ENCODE measurements at regions of chr11 and their contacts with region 1.

Region 1: DNA sequence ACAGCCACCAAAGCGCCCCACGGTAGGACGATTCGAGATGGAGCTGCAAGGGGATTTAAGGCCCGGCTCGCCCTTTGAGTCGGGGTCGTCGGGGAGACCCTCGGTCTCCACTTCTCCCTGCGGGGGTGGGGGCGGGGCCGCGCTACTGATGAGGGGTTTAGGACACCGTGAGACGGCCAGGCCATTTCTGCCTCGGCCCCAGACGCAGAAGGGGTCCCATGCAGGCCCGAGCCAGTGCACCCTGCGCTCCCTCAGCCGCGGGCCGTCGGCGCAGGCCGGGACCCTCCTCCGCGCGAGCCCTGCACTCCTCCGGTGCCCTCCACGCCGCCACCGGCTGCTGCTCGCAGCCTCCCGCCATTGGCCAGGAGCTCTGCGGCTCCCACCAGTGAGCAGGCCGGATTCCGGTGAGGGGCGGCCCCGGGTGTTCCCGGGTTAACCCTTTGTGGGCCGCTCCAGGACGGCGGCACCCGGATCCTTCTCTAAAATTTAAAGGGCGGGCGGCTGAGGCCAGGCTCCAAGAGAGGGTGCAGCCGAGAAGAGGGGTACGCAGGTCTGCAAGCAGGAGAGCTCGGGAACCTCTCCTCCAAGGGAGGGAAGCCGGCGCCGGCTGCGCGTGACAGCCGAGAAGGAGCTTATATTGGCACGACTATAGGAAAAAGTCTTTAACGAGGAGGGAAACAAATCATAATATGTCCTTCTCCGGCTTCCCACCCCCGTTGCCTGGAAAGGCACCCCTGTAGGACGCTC is 18.0 kb downstream of the CREB3L1 start:
- DNase-seq: no peak
- H3K4me3 ChIP-seq: peak overlapping the region; percentile 61
- H3K27ac ChIP-seq: peak overlapping the region; percentile 88
- H3K27me3 ChIP-seq: no peaks in the 10 kb centered on the region
- CTCF ChIP-seq: no peak

Region 2: GRCh38 chr11:46247664-46248063 is 47.8 kb before region 1 on chr11:
- CTCF ChIA-PET with region 1: interaction called, 4 read pairs
- POLR2A ChIA-PET with region 1: interaction called, 35 read pairs
- DNase-seq: no peak
- H3K4me3 ChIP-seq: no peak overlapping the region
- H3K27ac ChIP-seq: peak overlapping the region; percentile 99
- H3K27me3 ChIP-seq: no peaks in the 10 kb centered on the region
- CTCF ChIP-seq: peak; percentile 10; the same call in 1 of the 2 replicates

Region 3: DNA sequence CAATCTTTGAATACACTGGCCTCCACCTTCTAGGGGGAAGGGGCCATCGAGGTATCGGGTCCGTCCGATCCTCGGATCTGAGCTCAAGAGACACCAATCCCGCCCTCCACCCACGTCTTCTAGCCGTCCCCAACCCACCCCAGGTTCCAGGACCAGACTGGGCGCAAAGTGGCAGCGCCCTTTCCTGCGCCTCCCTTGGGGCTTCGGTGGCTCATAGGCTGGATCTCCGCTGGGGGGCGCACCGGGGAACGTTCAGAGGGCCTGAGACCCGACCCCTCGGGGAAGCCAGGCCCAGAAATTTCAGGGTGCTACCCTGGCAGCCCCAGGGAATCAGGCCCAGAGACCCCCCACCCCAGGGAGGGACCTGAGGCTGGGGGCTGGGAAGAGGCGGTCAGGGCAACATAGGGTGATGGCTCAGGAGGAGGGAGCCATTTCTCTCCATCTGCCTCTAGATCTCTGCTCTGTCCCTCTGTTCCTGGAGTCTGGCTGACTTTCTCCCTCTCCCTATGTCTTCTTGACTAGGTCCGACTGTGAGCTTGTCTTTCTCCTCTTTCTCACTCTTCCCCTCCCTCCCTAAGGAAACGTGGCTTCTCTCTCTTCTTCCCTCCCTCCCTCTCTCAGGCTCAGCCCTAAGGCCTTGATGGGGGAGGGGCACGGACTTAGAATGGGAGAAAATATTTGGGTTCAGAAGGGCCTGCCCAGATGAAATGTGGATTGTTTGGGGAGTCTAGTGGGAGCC is 16.9 kb before region 1 on chr11:
- CTCF ChIA-PET with region 1: interaction called, 38 read pairs
- POLR2A ChIA-PET with region 1: interaction called, 27 read pairs
- DNase-seq: no peak
- H3K4me3 ChIP-seq: peak overlapping the region; percentile 95
- H3K27ac ChIP-seq: peak overlapping the region; percentile 91
- H3K27me3 ChIP-seq: no peaks in the 10 kb centered on the region
- CTCF ChIP-seq: peak; percentile 83

Region 4: DNA sequence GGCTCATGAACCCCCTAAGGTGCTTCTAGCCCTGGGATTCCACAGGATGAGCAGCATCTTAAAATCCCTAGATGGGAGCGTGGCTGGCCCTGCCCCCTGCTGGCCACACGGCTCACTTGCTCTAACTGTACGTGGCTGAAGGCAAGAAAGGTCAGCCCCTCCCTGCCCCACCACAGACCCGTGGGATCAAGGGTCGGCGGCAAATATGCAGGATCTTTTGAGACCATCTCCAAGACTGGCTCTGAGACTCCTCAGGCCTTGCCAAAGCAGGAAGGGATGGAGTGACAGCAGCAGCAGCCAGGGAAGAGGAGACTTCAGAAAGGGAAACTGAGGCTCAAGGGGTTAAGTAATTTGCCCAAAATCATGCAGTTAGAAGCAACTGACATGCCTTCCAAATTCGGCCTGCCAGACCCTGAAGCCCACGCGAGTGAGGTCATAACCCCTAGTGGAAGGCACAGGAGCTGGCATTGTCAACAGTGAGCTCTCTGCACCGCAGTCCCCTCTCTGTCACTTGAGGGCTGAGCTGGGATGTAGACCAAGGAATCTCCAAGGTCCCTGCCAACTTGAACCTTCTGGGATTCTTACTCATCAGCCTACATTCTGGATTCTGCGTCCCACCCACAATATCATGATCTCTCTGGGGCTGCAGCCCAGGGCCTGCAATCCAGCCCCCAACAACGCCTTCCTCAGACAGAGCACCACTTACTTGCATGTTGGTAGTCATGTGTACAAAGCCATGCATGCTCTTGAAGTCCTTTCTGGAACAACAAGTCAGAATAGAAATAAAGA is 13.3 kb after region 1 on chr11:
- CTCF ChIA-PET with region 1: interaction called, 14 read pairs
- POLR2A ChIA-PET with region 1: interaction called, 4 read pairs
- DNase-seq: no peak
- H3K4me3 ChIP-seq: no peak overlapping the region
- H3K27ac ChIP-seq: peak overlapping the region; percentile 47
- H3K27me3 ChIP-seq: no peaks in the 10 kb centered on the region
- CTCF ChIP-seq: peak; percentile 87

Region 5: DNA sequence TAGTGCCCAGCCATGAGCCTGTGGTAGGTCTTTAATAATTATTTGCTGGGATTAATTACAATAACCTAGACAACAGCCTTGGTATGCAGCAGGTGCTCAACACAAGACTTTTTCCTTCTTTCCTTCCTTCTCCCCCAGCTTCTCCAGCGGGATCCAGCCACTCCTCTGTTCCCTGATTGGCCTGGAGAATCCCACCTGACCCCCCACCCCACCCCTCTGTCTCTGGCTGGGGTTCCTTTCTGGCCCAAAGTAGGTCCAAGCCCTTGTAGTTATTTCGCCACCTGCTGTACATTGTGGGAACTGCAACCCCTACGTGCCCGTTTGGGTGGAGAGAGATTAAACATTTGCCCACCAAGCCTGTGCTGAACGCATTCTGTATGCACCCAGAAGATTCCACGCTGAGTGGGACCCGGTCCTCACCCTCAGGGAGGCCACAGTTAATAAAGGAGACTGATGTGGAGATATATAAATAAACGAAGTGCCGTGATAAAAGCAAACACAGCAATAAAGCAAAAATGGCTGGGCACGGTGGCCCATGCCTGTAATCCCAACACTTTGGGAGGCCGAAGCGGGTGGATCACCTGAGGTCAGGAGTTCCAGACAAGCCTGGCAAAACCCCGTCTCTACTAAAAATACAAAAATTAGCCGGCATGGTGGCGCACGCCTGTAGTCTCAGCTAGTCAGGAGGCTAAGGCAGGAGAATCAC is 19.7 kb after region 1 on chr11:
- CTCF ChIA-PET with region 1: interaction called, 14 read pairs
- POLR2A ChIA-PET with region 1: interaction called, 7 read pairs
- DNase-seq: no peak
- H3K4me3 ChIP-seq: no peak overlapping the region
- H3K27ac ChIP-seq: peak overlapping the region; percentile 21
- H3K27me3 ChIP-seq: no peaks in the 10 kb centered on the region
- CTCF ChIP-seq: peak; percentile 92

Region 6: GRCh38 chr11:46346886-46347636 is 51.6 kb after region 1 on chr11 and contains the start of gene DGKZ:
- CTCF ChIA-PET with region 1: no interaction called
- POLR2A ChIA-PET with region 1: no interaction called
- DNase-seq: no peak
- H3K4me3 ChIP-seq: peak within 1 kb of the TSS; percentile 90
- H3K27ac ChIP-seq: no peak within 1 kb of the TSS
- H3K27me3 ChIP-seq: no peaks in the 10 kb centered on the region
- CTCF ChIP-seq: peak; percentile 49
- polyA plus RNA-seq, gene DGKZ: 15.8 and 23.2 TPM in 2 replicates